CD4-positive, alpha-beta T cell (primary cell): ENCODE measurements at regions of chr7 and their contacts with region 1.

Region 1: DNA sequence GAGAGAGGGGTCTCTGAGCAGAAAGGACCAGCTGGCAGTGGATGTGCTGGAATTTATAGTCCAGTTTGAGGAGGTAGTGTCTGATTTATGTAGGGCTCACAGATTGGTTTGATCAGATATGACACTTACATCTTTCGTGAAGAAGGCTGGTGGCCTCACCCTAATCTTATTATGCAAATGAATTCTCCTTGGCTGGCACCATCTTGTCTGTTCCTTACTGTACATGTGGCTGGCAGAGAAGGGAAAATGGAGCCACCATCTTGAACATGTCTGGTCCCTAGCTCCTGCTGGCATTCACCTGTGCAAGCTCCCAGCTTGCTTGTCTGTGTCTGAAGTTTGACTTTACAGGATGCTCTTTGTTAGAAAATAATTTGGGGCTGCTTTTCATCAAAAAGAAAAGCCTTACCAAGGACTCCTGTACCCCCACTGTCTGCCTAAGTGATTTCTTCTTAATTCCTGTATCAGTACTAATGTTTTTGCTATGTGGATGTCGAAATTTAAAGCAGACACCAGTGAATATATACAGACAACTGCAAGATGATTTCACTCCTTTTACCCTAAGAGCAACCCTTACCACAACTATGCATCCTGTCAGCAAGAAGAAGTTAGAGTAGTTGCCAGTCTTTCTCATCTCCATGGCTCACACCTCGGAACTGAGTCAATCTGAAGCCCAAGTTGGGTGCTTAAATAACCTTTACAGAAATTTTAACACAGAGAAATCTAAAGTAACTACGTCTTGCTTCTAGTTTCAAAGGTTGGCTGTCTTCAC is 322.0 kb upstream of the SEMA3D start:
- DNase-seq: no peak
- ATAC-seq: no peak
- H3K4me3 ChIP-seq: no peak overlapping the region
- H3K4me3 Mint-ChIP-seq: no peak overlapping the region
- H3K27ac ChIP-seq: no peak overlapping the region
- H3K27ac Mint-ChIP-seq: no peak overlapping the region
- H3K4me1 ChIP-seq: no peaks in the 10 kb centered on the region
- H3K4me1 Mint-ChIP-seq: no peaks in the 10 kb centered on the region
- H3K27me3 ChIP-seq: no peaks in the 10 kb centered on the region
- H3K27me3 Mint-ChIP-seq: no peaks in the 10 kb centered on the region
- CTCF ChIP-seq: no peak

Region 2: DNA sequence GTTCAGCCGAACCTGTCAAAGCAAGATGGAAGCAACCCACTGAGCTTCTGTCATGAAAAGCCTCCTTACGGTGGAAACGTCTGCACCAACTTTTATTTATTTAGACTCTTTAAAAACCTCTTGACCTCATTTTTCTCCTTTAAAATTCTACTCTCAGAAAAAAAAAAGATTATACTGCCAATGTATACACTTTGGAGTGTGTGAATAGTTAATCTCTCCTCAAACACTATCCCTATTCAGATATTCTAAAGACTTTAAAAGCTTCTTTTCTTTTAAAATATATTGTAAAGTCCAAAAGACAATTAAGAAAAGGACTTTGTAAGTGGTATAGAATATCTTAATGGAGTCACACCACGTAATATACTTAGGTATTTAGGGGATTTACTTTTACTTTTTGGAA is 13.2 kb after region 1 on chr7:
- CTCF ChIA-PET with region 1: no interaction called
- POLR2A ChIA-PET with region 1: no interaction called
- intact Hi-C with region 1: loop called in 1 of 2 experiments (anchors 1 kb)
- DNase-seq: no peak
- ATAC-seq: no peak
- H3K4me3 ChIP-seq: no peak overlapping the region
- H3K4me3 Mint-ChIP-seq: no peak overlapping the region
- H3K27ac ChIP-seq: no peak overlapping the region
- H3K27ac Mint-ChIP-seq: no peak overlapping the region
- H3K4me1 ChIP-seq: no peaks in the 10 kb centered on the region
- H3K4me1 Mint-ChIP-seq: no peaks in the 10 kb centered on the region
- H3K27me3 ChIP-seq: no peaks in the 10 kb centered on the region
- H3K27me3 Mint-ChIP-seq: no peaks in the 10 kb centered on the region
- CTCF ChIP-seq: no peak